ENCODE measurements at regions of chr1 and their contacts with region 1.

Region 1: DNA sequence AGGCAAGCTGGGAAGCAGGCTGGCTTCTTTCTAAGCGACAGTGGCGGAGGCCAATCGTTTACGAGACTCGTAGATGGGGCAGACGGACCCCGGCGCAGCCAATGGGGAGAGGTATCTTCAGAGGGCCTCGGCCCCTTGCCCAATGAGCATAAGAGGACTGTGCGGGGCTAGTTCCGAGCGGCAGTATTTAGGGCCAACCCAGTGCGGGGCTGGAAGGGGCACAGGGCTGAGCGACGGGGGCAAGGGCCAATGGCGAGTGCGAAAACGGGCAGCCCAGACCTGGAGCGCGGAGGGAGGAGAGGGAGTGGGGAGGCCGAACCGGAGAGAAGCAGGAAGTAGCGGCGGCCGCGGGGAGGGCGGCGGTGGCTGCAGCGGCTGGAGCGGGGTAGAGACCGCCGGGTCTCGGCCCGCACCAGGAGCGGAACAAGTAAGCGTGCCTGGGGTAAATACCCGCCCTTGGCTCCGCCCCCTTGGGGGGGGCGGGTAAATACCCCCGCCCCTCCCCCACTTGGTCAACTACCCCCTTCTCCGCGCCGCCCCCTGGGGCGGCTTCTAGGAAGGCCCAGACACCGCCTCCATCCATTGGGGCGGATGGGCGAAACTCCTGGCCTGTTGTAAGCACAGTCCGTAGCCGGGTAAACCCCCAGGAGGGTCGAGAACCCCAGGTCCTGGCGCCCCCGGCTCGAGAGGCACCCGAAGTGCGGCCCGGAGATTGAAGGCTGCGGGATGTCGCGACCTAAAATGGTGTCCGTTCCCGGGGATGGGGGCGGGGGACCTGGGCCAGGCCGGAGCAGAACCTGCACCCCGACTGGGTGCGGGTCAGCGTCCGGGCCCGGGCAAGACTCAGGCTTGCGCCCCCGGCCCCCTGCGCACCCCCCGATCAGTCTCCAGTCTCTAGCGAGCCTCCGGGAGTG is at the start of gene ZNF687:
- DNase-seq: peak; percentile 100
- ATAC-seq: peak; percentile 85 to 88
- H3K4me3 ChIP-seq: peak within 1 kb of the TSS; percentile 70 to 81 (median 74)
- H3K27ac ChIP-seq: peak within 1 kb of the TSS; percentile 90 to 96 (median 94)
- H3K4me1 ChIP-seq: peaks cover 10 to 21% of the 10 kb centered on the region in 2 donors
- H3K27me3 ChIP-seq: no peaks in the 10 kb centered on the region
- CTCF ChIP-seq: no peak
- POLR2A ChIP-seq: peak; percentile 69 to 76
- total RNA-seq, gene ZNF687: 11.9 to 19.6 (median 16.6) TPM

Region 2: GRCh38 chr1:151130987-151131586 is 151.1 kb before region 1 on chr1:
- in situ Hi-C with region 1: no loop called
- intact Hi-C with region 1: no loop called
- DNase-seq: peak; percentile 67 to 77
- ATAC-seq: peak; percentile 25 to 64
- H3K4me3 ChIP-seq: peak overlapping the region; percentile 16 to 47 (median 32)
- H3K27ac ChIP-seq: peak overlapping the region; percentile 53 to 98 (median 68)
- H3K4me1 ChIP-seq: peaks cover 3 to 6% of the 10 kb centered on the region in 2 donors
- H3K27me3 ChIP-seq: no peaks in the 10 kb centered on the region
- CTCF ChIP-seq: no peak
- POLR2A ChIP-seq: peak in 1 of 2 donors; percentile 6

Region 3: DNA sequence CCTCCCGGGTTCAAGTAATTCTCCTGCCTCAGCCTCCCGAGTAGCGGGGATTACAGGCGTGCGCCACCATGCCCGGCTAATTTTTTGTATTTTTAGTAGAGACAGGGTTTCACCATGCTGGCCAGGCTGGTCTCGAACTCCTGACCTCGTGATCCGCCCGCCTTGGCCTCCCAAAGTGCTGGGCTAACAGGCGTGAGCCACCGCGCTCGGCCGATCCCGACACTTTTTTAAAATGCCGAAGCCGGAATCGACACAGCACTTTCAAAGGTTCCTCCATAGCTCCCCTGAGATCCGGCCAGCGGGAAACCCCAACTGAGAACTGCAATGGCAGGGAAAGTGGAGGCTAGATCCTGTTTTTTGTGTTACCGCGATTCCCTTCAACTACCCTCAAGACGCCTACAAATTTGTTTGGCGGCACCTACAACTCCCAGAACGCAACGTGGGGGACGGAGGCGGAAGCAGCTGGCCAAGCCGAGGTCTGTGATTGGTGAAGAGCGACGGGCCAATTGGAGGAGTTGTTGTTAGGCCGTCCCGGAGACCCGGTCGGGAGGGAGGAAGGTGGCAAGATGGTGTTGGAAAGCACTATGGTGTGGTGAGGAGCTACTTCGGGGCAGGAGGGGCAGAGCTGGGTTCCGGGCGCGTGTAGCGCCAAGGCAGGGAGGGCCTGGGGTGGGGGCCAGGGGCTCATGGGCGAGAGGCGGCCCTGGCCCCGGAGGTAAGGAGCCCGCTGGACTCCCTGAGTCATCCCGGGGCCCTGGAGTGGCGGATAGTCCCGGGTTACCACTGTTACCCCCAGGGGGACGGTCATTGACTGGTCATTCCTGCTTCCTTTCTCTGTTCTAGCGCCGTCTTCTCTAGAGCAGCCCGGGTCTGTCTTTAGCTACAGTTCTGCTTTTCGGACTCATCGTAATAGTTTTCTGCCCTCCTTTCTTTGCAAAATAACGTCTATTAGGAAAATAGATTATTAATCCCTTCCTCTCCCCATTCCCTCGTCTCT is 27.7 kb before region 1 on chr1 and contains the start of gene PSMD4:
- in situ Hi-C with region 1: no loop called
- intact Hi-C with region 1: loop called (anchors 1 kb)
- DNase-seq: peak; percentile 96 to 97
- ATAC-seq: peak; percentile 98 to 99
- H3K4me3 ChIP-seq: peak within 1 kb of the TSS; percentile 81 to 99 (median 89)
- H3K27ac ChIP-seq: peak within 1 kb of the TSS; percentile 90 to 99 (median 97)
- H3K4me1 ChIP-seq: peaks cover 19 to 27% of the 10 kb centered on the region in 2 donors
- H3K27me3 ChIP-seq: no peaks in the 10 kb centered on the region
- CTCF ChIP-seq: no peak
- POLR2A ChIP-seq: peak; percentile 92 to 97
- total RNA-seq, gene PSMD4: 263 to 439 (median 340) TPM

Region 4: DNA sequence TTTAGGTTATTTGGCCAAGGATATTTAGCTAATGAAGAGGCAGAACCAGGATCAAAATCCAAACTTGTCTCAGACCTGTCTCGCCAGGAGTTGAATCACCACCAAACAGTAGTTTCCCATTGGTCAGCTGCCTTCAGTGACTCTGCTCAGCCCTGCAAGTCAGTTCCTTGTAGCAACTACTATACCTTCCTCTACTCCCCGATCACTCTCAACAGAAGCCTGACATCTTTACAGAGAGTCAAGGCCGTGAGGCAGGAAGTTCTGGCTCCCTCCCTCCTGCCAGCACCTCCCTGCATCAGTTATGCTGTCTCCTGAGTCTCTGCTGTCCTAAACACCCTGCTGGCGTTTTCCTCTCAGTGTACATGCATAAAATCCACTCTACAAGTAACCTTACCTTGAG is 14.5 kb before region 1 on chr1:
- in situ Hi-C with region 1: no loop called
- intact Hi-C with region 1: no loop called
- DNase-seq: no peak
- ATAC-seq: no peak
- H3K4me3 ChIP-seq: no peak overlapping the region
- H3K27ac ChIP-seq: no peak overlapping the region
- H3K4me1 ChIP-seq: no peaks in the 10 kb centered on the region
- H3K27me3 ChIP-seq: no peaks in the 10 kb centered on the region
- CTCF ChIP-seq: no peak
- POLR2A ChIP-seq: no peak

Region 5: DNA sequence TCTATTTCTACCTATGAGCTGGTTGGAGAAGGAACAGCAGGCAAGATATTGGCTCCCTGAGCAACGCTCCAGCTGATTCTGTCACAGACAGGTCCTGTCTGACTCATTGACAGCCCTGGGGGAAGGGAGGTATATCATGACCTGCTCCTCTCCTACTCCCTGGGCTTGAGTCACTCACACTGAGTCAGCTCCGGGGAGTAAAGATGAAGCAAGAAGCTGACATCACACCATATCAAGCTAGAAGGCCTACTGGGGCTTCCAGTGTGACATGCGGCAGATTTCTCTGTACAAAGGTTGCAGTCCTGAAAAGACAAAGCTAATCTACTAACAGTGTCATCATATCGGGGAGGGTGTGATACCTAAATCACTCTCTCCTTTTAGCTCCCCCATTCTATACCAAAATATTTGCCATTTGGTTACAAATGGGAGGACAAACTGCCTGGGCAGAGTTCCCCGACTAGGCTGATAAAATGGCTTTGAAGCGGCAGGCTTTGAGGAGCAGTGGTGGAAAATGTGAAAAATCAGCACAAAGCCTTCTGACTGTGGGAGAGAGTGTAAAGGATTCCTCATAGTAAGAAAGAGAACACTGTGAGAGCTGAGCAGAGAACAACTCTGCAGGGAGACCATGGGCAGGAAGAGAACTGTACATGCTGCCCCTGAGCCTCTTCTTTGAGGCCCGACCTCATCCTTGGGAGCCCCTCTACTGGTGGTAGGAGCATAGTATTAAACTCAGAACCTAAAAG is 29.5 kb after region 1 on chr1:
- in situ Hi-C with region 1: no loop called
- intact Hi-C with region 1: loop called (anchors 1 kb)
- DNase-seq: peak; percentile 95 to 98
- ATAC-seq: peak; percentile 95 to 98
- H3K4me3 ChIP-seq: peak overlapping the region in 2 of 4 donors; percentile 8
- H3K27ac ChIP-seq: peak overlapping the region; percentile 91 to 95 (median 93)
- H3K4me1 ChIP-seq: peaks cover 55 to 69% of the 10 kb centered on the region in 2 donors
- H3K27me3 ChIP-seq: no peaks in the 10 kb centered on the region
- CTCF ChIP-seq: no peak
- POLR2A ChIP-seq: peak; percentile 15 to 16

Region 6: DNA sequence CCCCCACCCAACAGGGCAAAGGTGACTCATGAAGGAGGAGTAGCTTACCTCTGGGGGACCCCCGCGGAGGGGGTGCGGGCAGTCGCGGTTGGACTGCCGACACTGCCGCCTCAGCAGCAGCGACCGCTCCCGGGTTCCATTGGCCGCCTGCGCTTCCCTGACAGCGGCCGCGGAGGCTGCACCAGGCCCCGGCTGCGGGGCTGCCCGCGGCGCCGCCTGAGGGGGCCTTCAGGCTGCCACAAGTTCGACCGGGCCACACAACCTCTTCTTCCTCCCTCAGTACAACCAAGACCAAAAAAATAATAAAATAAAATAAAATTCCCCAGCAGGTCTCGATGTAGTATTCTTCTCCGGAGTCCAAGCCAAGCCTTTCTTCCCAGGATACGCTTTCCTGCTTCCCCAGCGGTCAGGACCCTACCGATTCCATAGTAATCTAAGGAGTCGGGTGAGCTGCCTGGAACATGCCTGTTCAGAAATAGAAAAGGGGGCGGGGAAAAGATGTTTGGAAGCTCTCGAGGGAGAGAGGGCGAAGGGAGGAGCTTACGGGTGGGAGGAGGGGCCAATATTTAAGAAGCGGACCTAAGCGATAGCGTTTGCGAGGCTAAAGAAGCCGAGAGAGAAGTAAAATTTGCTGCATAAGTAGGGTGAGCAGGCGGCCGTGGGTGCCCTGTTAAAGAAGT is 45.1 kb after region 1 on chr1 and contains the start of gene PI4KB:
- in situ Hi-C with region 1: no loop called
- intact Hi-C with region 1: loop called (anchors 1 kb)
- DNase-seq: peak; percentile 92 to 95
- ATAC-seq: peak; percentile 98
- H3K4me3 ChIP-seq: peak within 1 kb of the TSS; percentile 71 to 97 (median 78)
- H3K27ac ChIP-seq: peak within 1 kb of the TSS; percentile 92 to 96 (median 94)
- H3K4me1 ChIP-seq: peaks cover 32 to 40% of the 10 kb centered on the region in 2 donors
- H3K27me3 ChIP-seq: no peaks in the 10 kb centered on the region
- CTCF ChIP-seq: peak in 2 of 5 experiments; percentile 16 to 17
- POLR2A ChIP-seq: peak; percentile 70 to 91
- total RNA-seq, gene PI4KB: 65.5 to 98.1 (median 77.3) TPM

Region 7: DNA sequence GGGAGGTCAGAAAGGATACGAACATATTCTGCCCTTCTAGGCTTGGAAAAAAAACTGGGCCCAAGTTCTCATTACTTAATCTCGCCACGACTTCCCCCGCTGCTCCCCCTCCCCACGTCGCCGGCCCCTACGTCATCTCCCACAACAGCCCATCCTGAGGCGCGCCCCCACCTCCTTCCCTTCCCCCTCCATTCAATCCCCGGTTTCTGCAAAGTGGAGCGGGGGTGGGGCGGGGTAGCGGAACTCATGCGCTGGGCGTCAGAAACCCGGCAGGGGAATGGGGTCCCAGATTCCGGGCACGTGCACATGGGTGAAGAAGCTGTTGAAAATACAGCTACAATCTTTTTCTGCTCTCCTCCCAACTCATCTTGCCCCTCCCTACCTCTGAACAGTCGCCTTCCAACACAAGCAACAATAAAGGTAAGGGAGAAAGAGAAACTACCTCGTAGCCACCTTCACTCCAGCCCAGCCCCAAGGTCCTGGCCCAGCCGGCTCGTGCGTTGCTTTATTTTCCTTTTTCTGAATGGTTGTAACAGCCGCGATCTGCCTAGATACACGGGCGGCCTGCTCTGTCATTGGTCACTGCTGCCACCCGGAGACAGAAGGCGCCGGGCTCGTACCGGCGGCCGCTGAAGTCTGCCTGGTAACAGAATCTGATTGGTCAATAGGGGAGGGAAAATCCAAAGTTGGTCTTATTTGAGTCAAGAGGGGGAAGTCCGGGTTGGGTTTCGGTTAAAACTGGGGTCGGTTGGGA is 64.7 kb after region 1 on chr1 and contains the start of gene RFX5:
- in situ Hi-C with region 1: no loop called
- intact Hi-C with region 1: loop called (anchors 5 kb)
- DNase-seq: peak; percentile 93 to 95
- ATAC-seq: peak; percentile 98 to 99
- H3K4me3 ChIP-seq: peak within 1 kb of the TSS; percentile 59 to 81 (median 71)
- H3K27ac ChIP-seq: peak within 1 kb of the TSS; percentile 83 to 89 (median 86)
- H3K4me1 ChIP-seq: peaks cover 0 to 13% of the 10 kb centered on the region in 2 donors
- H3K27me3 ChIP-seq: no peaks in the 10 kb centered on the region
- CTCF ChIP-seq: no peak
- POLR2A ChIP-seq: peak; percentile 50 to 64
- total RNA-seq, gene RFX5: 11.4 to 24.0 (median 20.6) TPM

Region 8: DNA sequence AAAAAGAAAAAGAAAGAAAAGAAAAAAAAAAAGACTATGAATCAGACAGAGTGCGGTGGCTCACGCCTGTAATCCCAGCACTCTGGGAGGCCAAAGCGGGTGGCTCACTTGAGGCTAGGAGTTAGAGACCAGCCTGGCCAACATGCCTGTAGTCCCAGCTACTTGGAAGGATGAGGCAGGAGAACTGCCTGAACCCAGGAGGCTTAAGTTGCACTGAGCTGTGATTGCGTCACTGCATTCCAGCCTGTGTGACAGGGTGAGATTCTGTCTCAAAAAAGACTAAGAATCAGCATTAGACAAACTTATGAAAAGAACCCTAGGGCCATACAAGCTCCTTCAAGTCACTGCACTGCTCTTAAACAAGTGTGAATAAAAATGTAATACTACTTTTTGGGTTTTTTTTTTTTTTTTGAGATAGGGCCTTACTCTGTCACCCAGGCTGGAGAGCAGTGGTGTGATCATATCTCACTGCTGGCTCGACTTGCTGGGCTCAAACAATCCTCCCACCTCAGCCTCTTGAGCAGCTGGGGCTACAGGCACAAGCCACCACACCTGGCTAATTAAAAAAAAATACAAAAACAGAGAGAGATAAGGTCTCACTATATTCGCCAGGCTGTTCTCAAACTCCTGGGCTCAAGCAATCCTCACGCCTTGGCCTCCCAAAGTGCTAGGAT is 134.1 kb after region 1 on chr1:
- in situ Hi-C with region 1: no loop called
- intact Hi-C with region 1: no loop called
- DNase-seq: no peak
- ATAC-seq: no peak
- H3K4me3 ChIP-seq: no peak overlapping the region
- H3K27ac ChIP-seq: no peak overlapping the region
- H3K4me1 ChIP-seq: no peaks in the 10 kb centered on the region
- H3K27me3 ChIP-seq: no peaks in the 10 kb centered on the region
- CTCF ChIP-seq: no peak
- POLR2A ChIP-seq: no peak

Region 9: DNA sequence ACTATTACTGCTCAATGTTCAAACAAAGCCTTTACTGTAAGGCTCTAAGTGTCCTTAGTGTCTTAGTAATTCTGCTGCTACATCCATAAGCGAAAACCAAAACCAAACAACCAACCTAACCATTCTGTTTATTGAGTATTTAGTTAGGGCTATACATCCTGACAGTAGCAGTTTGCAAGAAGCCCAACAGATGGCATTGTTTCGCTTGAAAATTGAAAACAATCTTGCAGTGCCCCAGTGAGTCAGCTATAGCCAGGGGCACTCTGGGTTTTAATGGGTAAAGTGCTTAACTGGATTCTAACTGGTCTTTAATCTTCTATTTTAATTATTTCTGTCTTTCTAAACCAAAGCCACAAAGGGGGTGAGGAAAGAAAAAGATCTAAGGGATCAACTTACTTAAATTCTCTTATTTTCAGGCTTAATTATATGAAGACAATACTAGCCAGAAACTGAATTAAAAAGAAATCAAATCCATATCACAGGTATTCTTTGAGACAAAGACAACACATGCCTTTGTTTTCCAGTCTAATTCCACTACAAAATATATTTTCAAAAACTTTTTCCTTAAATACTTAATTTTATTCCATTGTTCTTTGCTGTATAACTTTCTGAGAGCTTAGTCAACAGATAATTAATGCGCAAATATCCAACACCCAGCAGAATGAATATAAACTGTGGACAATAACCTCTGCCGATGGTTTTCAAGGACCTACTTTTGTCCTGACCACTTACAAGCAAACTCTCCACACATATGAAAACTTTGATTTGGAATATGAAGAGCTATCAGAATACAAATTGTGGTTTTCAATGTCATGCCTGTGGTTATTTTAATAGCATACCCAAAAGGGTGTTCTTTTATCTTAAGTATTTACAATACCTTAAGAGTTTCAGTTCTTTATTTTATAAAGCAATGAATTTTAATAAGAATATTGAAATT is 161.9 kb after region 1 on chr1:
- in situ Hi-C with region 1: no loop called
- intact Hi-C with region 1: no loop called
- DNase-seq: peak; percentile 18 to 56
- ATAC-seq: peak; percentile 89 to 94
- H3K4me3 ChIP-seq: no peak overlapping the region
- H3K27ac ChIP-seq: peak overlapping the region; percentile 19 to 63 (median 46)
- H3K4me1 ChIP-seq: peaks cover 33 to 56% of the 10 kb centered on the region in 2 donors
- H3K27me3 ChIP-seq: no peaks in the 10 kb centered on the region
- CTCF ChIP-seq: peak; percentile 45 to 79 (median 57)
- POLR2A ChIP-seq: no peak

Region 10: DNA sequence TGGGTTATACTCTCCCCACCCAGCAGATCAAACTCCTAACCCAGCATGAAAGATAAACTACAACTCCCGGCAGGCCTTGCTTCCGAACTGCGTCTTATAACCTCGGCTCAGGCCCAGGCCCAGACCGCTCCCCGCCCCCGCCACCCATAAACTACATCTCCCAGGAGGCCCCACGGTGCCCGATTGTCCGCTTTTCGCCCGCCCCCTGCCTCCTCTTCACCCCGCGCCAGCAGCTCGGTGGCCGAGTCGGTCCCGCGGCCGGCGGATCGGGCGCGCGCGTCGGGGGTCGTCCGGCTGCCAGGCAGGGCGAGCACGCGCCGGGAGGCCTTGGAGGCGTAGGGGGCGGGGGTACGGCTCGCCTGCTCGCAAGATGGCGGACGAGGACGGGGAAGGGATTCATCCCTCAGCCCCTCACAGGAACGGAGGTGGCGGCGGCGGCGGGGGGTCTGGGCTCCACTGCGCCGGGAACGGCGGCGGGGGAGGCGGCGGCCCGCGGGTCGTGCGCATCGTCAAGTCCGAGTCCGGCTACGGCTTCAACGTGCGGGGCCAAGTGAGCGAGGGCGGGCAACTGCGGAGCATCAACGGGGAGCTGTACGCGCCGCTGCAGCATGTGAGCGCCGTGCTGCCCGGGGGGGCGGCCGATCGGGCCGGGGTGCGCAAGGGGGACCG is 329.7 kb after region 1 on chr1 and contains the start of gene SNX27:
- in situ Hi-C with region 1: no loop called
- intact Hi-C with region 1: loop called (anchors 5 kb)
- DNase-seq: peak; percentile 93 to 94
- ATAC-seq: peak; percentile 93 to 94
- H3K4me3 ChIP-seq: peak within 1 kb of the TSS; percentile 76 to 86 (median 80)
- H3K27ac ChIP-seq: peak within 1 kb of the TSS; percentile 80 to 97 (median 94)
- H3K4me1 ChIP-seq: peaks cover 29 to 42% of the 10 kb centered on the region in 2 donors
- H3K27me3 ChIP-seq: no peaks in the 10 kb centered on the region
- CTCF ChIP-seq: no peak
- POLR2A ChIP-seq: peak; percentile 85 to 87
- total RNA-seq, gene SNX27: 37.0 to 43.7 (median 40.9) TPM

Region 11: GRCh38 chr1:151828965-151829698 is 546.9 kb after region 1 on chr1:
- in situ Hi-C with region 1: no loop called
- intact Hi-C with region 1: loop called (anchors 5 kb)
- DNase-seq: peak in 1 of 2 donors; percentile 80
- ATAC-seq: no peak
- H3K4me3 ChIP-seq: peak overlapping the region in 1 of 4 donors; percentile 84
- H3K27ac ChIP-seq: peak overlapping the region; percentile 98 to 99 (median 99)
- H3K4me1 ChIP-seq: peaks cover 58 to 75% of the 10 kb centered on the region in 2 donors
- H3K27me3 ChIP-seq: no peaks in the 10 kb centered on the region
- CTCF ChIP-seq: no peak
- POLR2A ChIP-seq: no peak

Measured in gastrocnemius medialis (tissue), 4 donors.